HepG2 (cell line): ENCODE measurements at regions of chr11 and their contacts with region 1.

Region 1: DNA sequence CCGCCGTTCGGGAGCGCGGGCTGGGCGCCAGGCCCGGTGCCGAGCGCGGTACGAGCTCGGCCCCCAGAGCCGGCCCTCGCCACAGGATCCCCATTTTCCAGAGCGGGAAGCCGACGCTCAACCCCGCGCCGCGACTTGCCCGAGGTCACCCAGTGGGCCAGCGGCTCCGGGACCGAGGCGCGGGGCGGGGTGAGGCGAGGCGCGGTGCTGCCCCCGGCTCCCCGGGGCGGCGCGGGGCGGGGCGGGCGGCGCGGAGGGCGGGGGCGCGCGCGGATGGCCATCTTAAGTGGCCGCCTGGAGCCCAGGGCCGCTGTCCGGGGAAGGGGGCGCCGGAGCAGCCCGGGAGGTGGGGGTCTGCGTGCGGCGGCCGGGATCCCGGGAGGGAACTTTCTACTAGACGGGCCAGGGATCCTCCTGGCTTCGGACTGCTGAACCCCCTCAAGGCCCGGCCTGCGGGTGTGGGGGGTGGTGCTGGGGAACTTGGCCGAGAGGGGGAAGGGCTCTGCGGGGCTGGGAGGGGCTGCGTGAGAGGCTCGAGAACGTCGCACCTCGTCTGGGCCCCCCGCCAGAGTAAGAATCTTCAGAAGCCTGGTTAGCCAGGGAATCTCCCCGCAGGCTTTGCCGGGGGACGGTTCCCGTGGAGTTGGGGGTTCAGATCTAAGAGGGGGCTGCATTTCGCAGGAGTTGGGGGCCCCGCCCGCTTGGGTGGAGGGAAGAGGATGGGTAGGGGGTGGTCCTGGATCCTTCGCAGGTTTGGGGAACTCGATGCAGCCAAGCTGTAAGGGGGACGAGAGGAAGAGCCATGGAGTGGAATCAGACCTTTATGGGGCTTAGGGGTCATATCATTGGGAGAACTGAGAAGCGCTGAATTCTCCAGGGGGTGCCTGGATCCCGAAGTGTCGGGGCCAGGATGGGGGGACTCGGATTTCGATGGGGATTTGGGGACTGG is 678 bp upstream of the INPPL1 start:
- DNase-seq: no peak
- ATAC-seq: peak; percentile 41
- H3K4me3 ChIP-seq: peak overlapping the region; percentile 83 to 90 (median 85)
- H3K27ac ChIP-seq: peak overlapping the region; percentile 60
- H3K4me1 ChIP-seq: peaks cover 35% of the 10 kb centered on the region
- H3K27me3 ChIP-seq: peaks cover 0 to 9% of the 10 kb centered on the region in 2 experiments; a peak in 1 of 5 replicates
- CTCF ChIP-seq: no peak
- EP300 ChIP-seq: no peak
- POLR2A ChIP-seq: no peak; a peak in 1 of 4 replicates
- RAD21 ChIP-seq: no peak

Region 2: GRCh38 chr11:72195871-72196270 is 28.0 kb before region 1 on chr11:
- CTCF ChIA-PET with region 1: no interaction called
- POLR2A ChIA-PET with region 1: no interaction called
- in situ Hi-C with region 1: no loop called
- intact Hi-C with region 1: no loop called
- DNase-seq: no peak
- ATAC-seq: no peak
- H3K4me3 ChIP-seq: no peak overlapping the region
- H3K27ac ChIP-seq: no peak overlapping the region
- H3K4me1 ChIP-seq: peaks cover 9% of the 10 kb centered on the region; the same call in 1 of the 2 replicates
- H3K27me3 ChIP-seq: no peaks in the 10 kb centered on the region
- CTCF ChIP-seq: no peak
- EP300 ChIP-seq: no peak
- POLR2A ChIP-seq: no peak
- RAD21 ChIP-seq: no peak

Region 3: DNA sequence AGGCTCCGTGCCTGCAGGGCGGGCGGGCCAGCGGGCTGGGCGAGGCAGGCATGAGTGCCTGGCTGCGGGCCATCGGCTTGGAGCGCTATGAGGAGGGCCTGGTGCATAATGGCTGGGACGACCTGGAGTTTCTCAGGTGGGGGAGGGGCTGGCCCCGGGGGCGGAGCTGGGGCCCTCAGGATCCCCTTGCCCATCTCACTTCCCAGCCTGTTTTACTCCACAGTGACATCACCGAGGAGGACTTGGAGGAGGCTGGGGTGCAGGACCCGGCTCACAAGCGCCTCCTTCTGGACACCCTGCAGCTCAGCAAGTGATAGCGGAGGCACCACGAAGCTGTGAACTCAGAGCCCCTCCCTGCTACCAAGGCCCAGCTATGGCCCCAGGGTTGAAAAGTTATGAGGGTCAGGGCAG is 14.2 kb after region 1 on chr11:
- CTCF ChIA-PET with region 1: no interaction called
- POLR2A ChIA-PET with region 1: interaction called, 4 read pairs
- in situ Hi-C with region 1: no loop called
- intact Hi-C with region 1: loop called (anchors 2 kb)
- DNase-seq: peak; percentile 47
- ATAC-seq: peak; percentile 63
- H3K4me3 ChIP-seq: no peak overlapping the region
- H3K27ac ChIP-seq: no peak overlapping the region
- H3K4me1 ChIP-seq: peaks cover 17% of the 10 kb centered on the region
- H3K27me3 ChIP-seq: peaks cover 2 to 30% of the 10 kb centered on the region in 2 experiments; a peak in 4 of 5 replicates
- CTCF ChIP-seq: peak; percentile 80
- EP300 ChIP-seq: no peak
- POLR2A ChIP-seq: no peak
- RAD21 ChIP-seq: peak; percentile 56

Region 4: GRCh38 chr11:72333661-72334060 is 109.8 kb after region 1 on chr11:
- CTCF ChIA-PET with region 1: no interaction called
- POLR2A ChIA-PET with region 1: no interaction called
- in situ Hi-C with region 1: no loop called
- intact Hi-C with region 1: no loop called
- DNase-seq: no peak
- ATAC-seq: peak; percentile 40
- H3K4me3 ChIP-seq: no peak overlapping the region
- H3K27ac ChIP-seq: no peak overlapping the region
- H3K4me1 ChIP-seq: peaks cover 11% of the 10 kb centered on the region
- H3K27me3 ChIP-seq: no peaks in the 10 kb centered on the region
- CTCF ChIP-seq: peak; percentile 31
- EP300 ChIP-seq: no peak
- POLR2A ChIP-seq: no peak
- RAD21 ChIP-seq: no peak

Region 5: DNA sequence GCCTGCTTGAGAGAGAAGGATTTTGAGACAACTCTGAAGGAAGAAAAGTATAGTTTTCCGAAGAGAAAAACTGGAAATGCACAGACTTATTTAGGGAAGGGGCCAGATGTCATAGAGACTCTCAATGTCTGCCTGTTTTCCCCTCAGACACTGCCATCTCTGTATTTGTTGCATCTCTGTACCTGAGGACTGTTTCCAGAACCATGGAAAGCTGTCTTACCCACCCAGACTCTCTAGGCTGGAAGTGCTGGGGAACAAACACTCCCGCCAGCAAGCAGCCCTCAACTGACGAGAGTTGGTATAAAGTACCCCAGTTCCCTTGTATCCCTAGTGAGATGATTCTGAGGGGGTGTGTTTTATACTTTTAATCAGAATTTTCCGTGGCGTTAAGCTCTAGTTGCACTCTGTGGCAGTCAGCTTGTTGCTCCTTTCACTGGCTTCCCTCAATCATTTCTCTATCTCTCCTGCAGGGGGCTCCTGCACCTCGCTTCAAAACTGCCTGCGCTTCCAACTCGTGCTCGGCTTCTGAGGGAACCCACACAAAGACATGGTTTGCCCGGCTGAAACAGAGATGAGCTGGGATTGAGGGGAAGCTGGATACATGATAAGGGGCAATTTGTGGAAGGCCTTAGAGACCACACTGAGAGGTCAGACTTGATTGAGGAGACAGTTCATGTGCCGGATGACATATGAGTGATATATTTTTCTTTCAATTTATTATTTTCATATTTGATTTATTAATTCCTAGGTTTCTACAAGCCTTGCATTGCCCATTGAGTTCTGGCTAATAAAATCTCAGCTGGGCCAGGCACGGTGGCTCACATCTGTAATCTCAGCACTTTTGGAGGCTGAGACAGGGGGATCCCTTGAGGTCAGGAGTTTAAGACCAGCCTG is 247.4 kb after region 1 on chr11:
- CTCF ChIA-PET with region 1: no interaction called
- POLR2A ChIA-PET with region 1: no interaction called
- in situ Hi-C with region 1: no loop called
- intact Hi-C with region 1: no loop called
- DNase-seq: peak; percentile 60
- ATAC-seq: peak; percentile 95
- H3K4me3 ChIP-seq: no peak overlapping the region
- H3K27ac ChIP-seq: no peak overlapping the region
- H3K4me1 ChIP-seq: no peaks in the 10 kb centered on the region; the same call in 1 of the 2 replicates
- H3K27me3 ChIP-seq: peaks cover 0 to 28% of the 10 kb centered on the region in 2 experiments; a peak in 4 of 5 replicates
- CTCF ChIP-seq: peak; percentile 83
- EP300 ChIP-seq: no peak
- POLR2A ChIP-seq: no peak
- RAD21 ChIP-seq: 0 out of 2 replicates have a peak, but pooled peaks have one; percentile 18